Heart left ventricle (tissue), 16 donors: ENCODE measurements at regions of chr20 and their contacts with region 1.

Region 1: DNA sequence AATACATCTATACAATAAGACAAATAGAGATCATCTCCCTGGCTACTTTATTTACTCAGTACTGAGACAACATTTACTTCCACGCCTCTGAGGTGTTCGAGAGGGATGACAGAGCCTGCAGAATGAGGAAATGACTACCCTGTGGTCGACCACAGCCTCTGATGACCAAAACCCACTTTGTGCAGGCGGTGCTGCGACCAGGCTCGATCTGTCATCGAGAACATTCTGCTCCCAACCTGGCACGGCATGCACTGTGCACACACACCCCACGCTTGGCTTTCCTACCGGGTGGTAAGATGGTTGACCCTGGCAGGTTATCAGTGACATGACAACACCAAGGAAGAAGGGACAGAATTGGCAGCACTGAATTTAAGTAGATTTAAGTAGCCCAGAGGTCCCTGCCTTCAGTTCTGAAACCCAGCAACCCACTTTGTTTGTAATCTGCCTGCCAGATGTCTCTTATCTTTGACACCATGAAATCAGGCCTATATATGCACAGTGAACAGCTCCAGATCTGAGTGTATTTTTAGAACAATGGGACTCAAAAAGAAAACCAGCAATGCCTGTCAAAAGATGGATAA is 42.6 kb downstream of the TTI1 start:
- DNase-seq: peak; percentile 52 to 92 (median 76)
- ATAC-seq: peak; percentile 66 to 75 (median 74)
- H3K4me3 ChIP-seq: no peak overlapping the region
- H3K27ac ChIP-seq: peak overlapping the region; percentile 68 to 93 (median 83)
- H3K4me1 ChIP-seq: peaks cover 7 to 89% (median 53%) of the 10 kb centered on the region in 12 donors
- H3K27me3 ChIP-seq: no peaks in the 10 kb centered on the region
- CTCF ChIP-seq: no peak
- POLR2A ChIP-seq: no peak

Region 2: GRCh38 chr20:37651932-37652331 is 338.7 kb before region 1 on chr20:
- intact Hi-C with region 1: loop called in 5 of 10 experiments (anchors 2 to 10 kb)
- DNase-seq: peak in 4 of 5 donors; percentile 37 to 58 (median 50)
- ATAC-seq: peak; percentile 73 to 88 (median 83)
- H3K4me3 ChIP-seq: no peak overlapping the region
- H3K27ac ChIP-seq: no peak overlapping the region
- H3K4me1 ChIP-seq: peaks cover 0 to 13% (median 0%) of the 10 kb centered on the region in 12 donors
- H3K27me3 ChIP-seq: no peaks in the 10 kb centered on the region
- CTCF ChIP-seq: peak; percentile 25 to 58 (median 42)
- POLR2A ChIP-seq: no peak

Region 3: DNA sequence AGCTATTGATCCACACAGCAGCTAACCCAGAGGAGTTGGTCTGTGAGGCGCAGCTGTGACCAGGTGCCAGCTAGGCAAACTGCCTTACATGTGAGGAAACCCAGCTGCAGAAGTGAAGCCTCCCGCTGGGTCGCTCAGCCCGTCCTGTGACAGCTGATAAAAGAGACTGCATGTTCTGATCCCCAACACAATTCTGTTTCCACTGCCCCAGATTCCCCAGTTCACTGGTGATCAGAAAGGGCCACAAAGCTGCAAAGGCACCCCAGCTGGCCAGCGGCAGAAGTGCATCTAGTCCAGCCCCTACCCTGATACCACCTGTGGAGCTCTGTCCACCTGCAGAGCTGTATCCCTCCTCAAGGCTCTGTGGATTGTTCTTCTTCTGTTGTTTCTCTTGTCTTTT is 232.3 kb before region 1 on chr20:
- intact Hi-C with region 1: loop called in 8 of 10 experiments (anchors 2 to 10 kb)
- DNase-seq: no peak
- ATAC-seq: peak in 3 of 4 donors; percentile 10 to 60 (median 33)
- H3K4me3 ChIP-seq: no peak overlapping the region
- H3K27ac ChIP-seq: no peak overlapping the region
- H3K4me1 ChIP-seq: peaks cover 0 to 4% (median 0%) of the 10 kb centered on the region in 12 donors
- H3K27me3 ChIP-seq: no peaks in the 10 kb centered on the region
- CTCF ChIP-seq: peak in 1 of 12 donors; percentile 11
- POLR2A ChIP-seq: no peak

Region 4: GRCh38 chr20:37845241-37845711 is 145.4 kb before region 1 on chr20:
- intact Hi-C with region 1: loop called in 1 of 10 experiments (anchors 10 kb)
- DNase-seq: peak; percentile 12 to 78 (median 64)
- ATAC-seq: peak; percentile 87 to 95 (median 91)
- H3K4me3 ChIP-seq: no peak overlapping the region
- H3K27ac ChIP-seq: peak overlapping the region in 2 of 12 donors; percentile 37 to 39
- H3K4me1 ChIP-seq: peaks cover 0 to 21% (median 2%) of the 10 kb centered on the region in 12 donors
- H3K27me3 ChIP-seq: no peaks in the 10 kb centered on the region
- CTCF ChIP-seq: no peak
- POLR2A ChIP-seq: no peak

Region 5: DNA sequence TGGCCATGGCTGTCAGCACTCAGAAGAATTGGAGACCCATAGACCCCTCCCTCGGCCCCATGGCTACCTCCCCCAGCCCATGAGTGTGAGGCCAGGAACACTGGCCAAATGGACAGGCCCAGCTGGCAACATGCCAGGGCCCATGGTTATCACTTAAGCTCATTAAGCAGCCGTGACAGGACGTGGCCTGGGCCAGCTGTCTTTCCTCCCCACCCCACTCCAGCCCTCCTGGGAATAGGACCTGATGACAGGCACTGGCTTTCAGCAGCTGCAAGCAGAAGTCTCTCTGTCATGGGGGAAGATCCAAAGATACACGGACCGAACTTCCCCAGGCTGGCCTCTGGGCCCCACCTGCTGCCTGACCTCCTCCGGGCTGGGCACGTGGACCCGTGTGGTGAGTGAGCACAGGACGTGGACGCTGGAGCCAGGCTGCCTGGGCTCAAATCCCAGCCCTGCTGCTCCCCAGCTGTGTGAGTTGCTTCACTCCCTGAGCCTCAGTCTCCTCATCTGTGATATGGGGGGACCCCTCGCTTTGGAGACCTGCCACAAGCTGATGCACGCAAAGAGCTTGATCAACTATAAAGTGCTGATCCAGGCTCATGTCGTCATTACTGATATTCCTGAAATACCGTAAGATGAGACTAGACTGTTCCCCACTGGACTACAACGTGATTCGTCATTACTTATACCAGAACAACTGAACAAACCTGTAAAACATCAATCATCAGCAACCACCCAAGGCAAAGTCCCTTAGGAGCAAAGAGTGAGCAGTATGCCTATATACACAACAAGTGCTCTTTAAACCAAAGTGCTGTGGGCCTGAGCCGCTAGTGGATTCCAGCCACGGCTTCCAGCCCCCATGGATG is 109.7 kb before region 1 on chr20:
- intact Hi-C with region 1: loop called in 1 of 10 experiments (anchors 2 kb)
- DNase-seq: peak; percentile 73 to 94 (median 89)
- ATAC-seq: peak; percentile 89 to 93 (median 90)
- H3K4me3 ChIP-seq: no peak overlapping the region
- H3K27ac ChIP-seq: peak overlapping the region in 6 of 12 donors; percentile 2 to 58 (median 18)
- H3K4me1 ChIP-seq: peaks cover 0 to 47% (median 13%) of the 10 kb centered on the region in 12 donors
- H3K27me3 ChIP-seq: peaks cover 0 to 25% (median 3%) of the 10 kb centered on the region in 9 donors
- CTCF ChIP-seq: no peak
- POLR2A ChIP-seq: no peak

Region 6: GRCh38 chr20:37901654-37902503 is 88.8 kb before region 1 on chr20:
- intact Hi-C with region 1: loop called in 5 of 10 experiments (anchors 5 kb)
- DNase-seq: peak in 1 of 5 donors; percentile 49
- ATAC-seq: peak; percentile 43 to 78 (median 64)
- H3K4me3 ChIP-seq: peak overlapping the region in 8 of 12 donors; percentile 41 to 54 (median 48)
- H3K27ac ChIP-seq: no peak overlapping the region
- H3K4me1 ChIP-seq: peaks cover 0 to 21% (median 10%) of the 10 kb centered on the region in 12 donors
- H3K27me3 ChIP-seq: peaks cover 17 to 65% (median 30%) of the 10 kb centered on the region in 9 donors
- CTCF ChIP-seq: peak in 11 of 12 donors; percentile 10 to 49 (median 31)
- POLR2A ChIP-seq: no peak

Region 7: GRCh38 chr20:37907677-37908401 is 82.8 kb before region 1 on chr20:
- intact Hi-C with region 1: loop called in 4 of 10 experiments (anchors 5 kb)
- DNase-seq: no peak
- ATAC-seq: no peak
- H3K4me3 ChIP-seq: no peak overlapping the region
- H3K27ac ChIP-seq: no peak overlapping the region
- H3K4me1 ChIP-seq: peaks cover 0 to 6% (median 0%) of the 10 kb centered on the region in 12 donors
- H3K27me3 ChIP-seq: peaks cover 10 to 74% (median 21%) of the 10 kb centered on the region in 9 donors
- CTCF ChIP-seq: no peak
- POLR2A ChIP-seq: no peak